A549 (cell line): ENCODE measurements at regions of chr9 and their contacts with region 1.

Region 1: GRCh38 chr9:77433675-77434445 is 214.3 kb downstream of the GNA14 start:
- DNase-seq: peak; percentile 67 to 85
- ATAC-seq: peak; percentile 92 to 98
- H3K4me3 ChIP-seq: no peak overlapping the region
- H3K27ac ChIP-seq: no peak overlapping the region
- H3K4me1 ChIP-seq: no peaks in the 10 kb centered on the region
- CTCF ChIP-seq: peak; percentile 96
- EP300 ChIP-seq: no peak
- POLR2A ChIP-seq: no peak
- RAD21 ChIP-seq: peak; percentile 94 to 95

Region 2: GRCh38 chr9:77449255-77450039 is 15.6 kb after region 1 on chr9:
- CTCF ChIA-PET with region 1: interaction called, 238 read pairs
- POLR2A ChIA-PET with region 1: no interaction called
- DNase-seq: no peak
- ATAC-seq: peak in 1 of 2 experiments; percentile 49; a peak in 3 of 6 replicates
- H3K4me3 ChIP-seq: no peak overlapping the region
- H3K27ac ChIP-seq: no peak overlapping the region
- H3K4me1 ChIP-seq: no peaks in the 10 kb centered on the region
- CTCF ChIP-seq: 0 out of 3 replicates have a peak, but pooled peaks have one; percentile 10
- EP300 ChIP-seq: no peak
- POLR2A ChIP-seq: no peak
- RAD21 ChIP-seq: no peak

Region 3: GRCh38 chr9:77469515-77470231 is 35.8 kb after region 1 on chr9:
- CTCF ChIA-PET with region 1: interaction called, 14 read pairs
- POLR2A ChIA-PET with region 1: no interaction called
- DNase-seq: no peak
- ATAC-seq: no peak
- H3K4me3 ChIP-seq: no peak overlapping the region
- H3K27ac ChIP-seq: no peak overlapping the region
- H3K4me1 ChIP-seq: 0 out of 3 replicates have a peak, but pooled peaks cover 5% of the 10 kb centered on the region
- CTCF ChIP-seq: no peak
- EP300 ChIP-seq: no peak
- POLR2A ChIP-seq: no peak
- RAD21 ChIP-seq: no peak

Region 4: DNA sequence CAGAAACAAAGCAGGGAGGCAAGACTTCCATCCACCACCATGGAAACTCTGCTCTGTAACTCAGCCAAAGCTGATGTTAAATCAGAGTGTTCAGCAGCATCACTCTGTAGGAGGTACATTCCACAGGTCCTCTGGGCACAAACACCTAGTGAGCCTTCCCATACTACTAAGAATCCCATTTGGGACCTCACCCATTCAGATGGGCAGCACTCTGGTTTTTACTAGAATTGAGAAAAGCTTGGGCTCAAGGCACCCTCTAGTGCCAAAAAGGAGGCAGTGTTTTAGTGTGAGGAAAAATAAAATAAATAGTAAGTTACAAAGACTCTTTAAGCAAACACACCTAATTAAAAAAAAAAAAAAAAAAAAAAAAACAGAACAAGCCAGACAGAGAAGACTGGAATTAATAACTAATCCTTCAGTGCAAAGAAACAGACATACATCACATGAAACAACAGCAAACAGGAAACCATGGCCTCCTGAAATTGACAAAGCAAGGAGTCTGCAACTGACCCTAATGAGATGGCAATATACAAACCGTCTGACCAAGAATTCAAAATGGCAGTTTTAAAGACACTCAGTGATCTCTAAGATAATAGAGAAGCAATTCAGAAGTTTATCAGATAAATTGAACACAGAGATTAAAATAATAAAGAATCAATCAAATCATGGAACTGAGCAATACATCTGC is 54.7 kb after region 1 on chr9:
- CTCF ChIA-PET with region 1: interaction called, 16 read pairs
- POLR2A ChIA-PET with region 1: no interaction called
- DNase-seq: peak in 1 of 2 experiments; percentile 25
- ATAC-seq: peak; percentile 68 to 74; a peak in 5 of 6 replicates
- H3K4me3 ChIP-seq: no peak overlapping the region
- H3K27ac ChIP-seq: no peak overlapping the region
- H3K4me1 ChIP-seq: no peaks in the 10 kb centered on the region
- CTCF ChIP-seq: peak; percentile 50
- EP300 ChIP-seq: no peak
- POLR2A ChIP-seq: no peak
- RAD21 ChIP-seq: peak; percentile 57 to 65

Region 5: DNA sequence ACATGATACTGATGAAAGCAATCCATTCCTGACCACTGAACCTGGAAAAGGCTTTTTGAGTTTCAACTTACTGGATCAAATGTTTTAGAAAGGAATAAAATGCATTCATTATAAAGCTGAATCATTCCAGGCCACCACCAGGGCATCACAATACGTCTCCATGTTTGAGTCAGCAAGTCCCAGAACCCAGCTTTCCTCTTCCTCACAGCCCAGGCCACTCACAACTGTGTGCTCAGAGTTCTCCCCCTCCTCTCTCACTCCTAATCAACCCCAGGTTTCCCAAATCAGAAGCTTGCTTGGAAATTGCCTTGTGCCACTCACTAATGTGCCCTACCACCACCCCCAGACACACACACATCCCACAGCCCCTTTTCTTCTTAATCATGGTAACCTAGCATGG is 122.5 kb after region 1 on chr9:
- CTCF ChIA-PET with region 1: no interaction called
- POLR2A ChIA-PET with region 1: no interaction called
- DNase-seq: no peak
- ATAC-seq: no peak
- H3K4me3 ChIP-seq: no peak overlapping the region
- H3K27ac ChIP-seq: no peak overlapping the region
- H3K4me1 ChIP-seq: no peaks in the 10 kb centered on the region
- CTCF ChIP-seq: no peak
- EP300 ChIP-seq: no peak
- POLR2A ChIP-seq: no peak
- RAD21 ChIP-seq: no peak

Region 6: DNA sequence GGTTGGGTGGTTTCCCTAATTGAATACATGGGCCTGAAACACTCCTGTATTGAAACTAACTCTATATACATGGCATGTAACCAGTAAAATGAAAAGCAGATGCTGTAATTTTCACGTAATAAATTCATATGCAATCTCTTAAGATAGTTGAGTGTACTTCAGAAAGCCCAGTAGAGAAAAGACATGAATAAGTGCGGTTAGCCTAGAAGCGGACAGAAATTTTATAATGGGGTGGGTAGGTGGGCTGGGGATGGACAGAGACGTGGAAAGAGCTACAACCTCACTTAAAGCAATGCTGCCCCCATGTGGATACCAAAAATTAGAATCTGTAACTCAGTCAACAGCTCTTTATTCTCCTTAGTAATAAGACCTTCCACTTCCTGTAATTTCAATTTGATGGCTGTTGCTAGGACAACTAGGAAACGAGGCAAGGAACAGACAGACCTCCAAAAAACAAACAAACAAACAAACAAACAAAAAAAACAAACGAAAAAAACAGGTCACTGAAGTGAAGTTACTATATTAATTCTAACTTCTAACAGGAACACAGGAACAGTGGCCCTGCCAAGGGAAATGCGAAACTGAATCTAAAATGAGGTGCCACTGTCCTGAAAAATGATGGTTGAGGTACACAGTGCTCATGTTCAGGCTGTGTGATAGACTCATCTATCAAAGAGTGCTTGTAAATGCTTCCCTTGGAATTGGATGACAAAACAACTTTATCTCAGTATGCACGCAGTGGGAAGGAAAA is 317.7 kb after region 1 on chr9:
- CTCF ChIA-PET with region 1: interaction called, 56 read pairs
- POLR2A ChIA-PET with region 1: interaction called, 3 read pairs
- DNase-seq: peak; percentile 13 to 58
- ATAC-seq: peak; percentile 88 to 95
- H3K4me3 ChIP-seq: no peak overlapping the region
- H3K27ac ChIP-seq: no peak overlapping the region
- H3K4me1 ChIP-seq: 0 out of 3 replicates have a peak, but pooled peaks cover 6% of the 10 kb centered on the region
- CTCF ChIP-seq: peak; percentile 86
- EP300 ChIP-seq: no peak
- POLR2A ChIP-seq: no peak
- RAD21 ChIP-seq: peak; percentile 86 to 87

Region 7: DNA sequence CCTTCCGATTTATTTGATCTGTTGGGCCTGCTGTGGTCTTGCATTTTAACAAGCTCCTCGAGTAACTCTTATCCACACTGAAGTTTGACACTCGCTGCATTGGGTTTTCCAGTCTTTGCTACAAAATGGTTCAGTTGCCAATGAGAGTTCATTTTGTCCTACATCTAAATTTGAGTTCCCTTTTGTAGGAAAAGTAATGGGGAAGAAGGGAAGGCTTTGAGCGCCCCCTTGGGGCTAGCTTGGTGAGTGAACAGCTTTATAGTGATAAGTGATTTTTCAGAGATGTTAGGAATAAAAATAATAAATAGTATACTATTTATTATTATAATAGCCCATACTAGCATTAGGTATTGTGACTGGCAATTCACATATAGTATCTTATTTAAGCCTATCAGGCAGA is 687.6 kb after region 1 on chr9:
- CTCF ChIA-PET with region 1: interaction called, 13 read pairs
- POLR2A ChIA-PET with region 1: no interaction called
- DNase-seq: peak; percentile 21 to 55
- ATAC-seq: peak in 1 of 2 experiments; percentile 74; a peak in 3 of 6 replicates
- H3K4me3 ChIP-seq: no peak overlapping the region
- H3K27ac ChIP-seq: no peak overlapping the region
- H3K4me1 ChIP-seq: no peaks in the 10 kb centered on the region
- CTCF ChIP-seq: peak; percentile 69
- EP300 ChIP-seq: no peak
- POLR2A ChIP-seq: no peak
- RAD21 ChIP-seq: peak; percentile 74 to 76